ENCODE measurements at regions of chr1 and their contacts with region 1.

Region 1: GRCh38 chr1:169514566-169515270 is 29.0 kb upstream of the SLC19A2 start:
- DNase-seq: peak; percentile 32
- ATAC-seq: peak; percentile 44
- H3K4me3 ChIP-seq: no peak overlapping the region
- H3K27ac ChIP-seq: 0 out of 2 replicates have a peak overlapping the region, but pooled peaks have one; percentile 2
- H3K4me1 ChIP-seq: peaks cover 58% of the 10 kb centered on the region
- H3K27me3 ChIP-seq: no peaks in the 10 kb centered on the region
- CTCF ChIP-seq: no peak

Region 2: DNA sequence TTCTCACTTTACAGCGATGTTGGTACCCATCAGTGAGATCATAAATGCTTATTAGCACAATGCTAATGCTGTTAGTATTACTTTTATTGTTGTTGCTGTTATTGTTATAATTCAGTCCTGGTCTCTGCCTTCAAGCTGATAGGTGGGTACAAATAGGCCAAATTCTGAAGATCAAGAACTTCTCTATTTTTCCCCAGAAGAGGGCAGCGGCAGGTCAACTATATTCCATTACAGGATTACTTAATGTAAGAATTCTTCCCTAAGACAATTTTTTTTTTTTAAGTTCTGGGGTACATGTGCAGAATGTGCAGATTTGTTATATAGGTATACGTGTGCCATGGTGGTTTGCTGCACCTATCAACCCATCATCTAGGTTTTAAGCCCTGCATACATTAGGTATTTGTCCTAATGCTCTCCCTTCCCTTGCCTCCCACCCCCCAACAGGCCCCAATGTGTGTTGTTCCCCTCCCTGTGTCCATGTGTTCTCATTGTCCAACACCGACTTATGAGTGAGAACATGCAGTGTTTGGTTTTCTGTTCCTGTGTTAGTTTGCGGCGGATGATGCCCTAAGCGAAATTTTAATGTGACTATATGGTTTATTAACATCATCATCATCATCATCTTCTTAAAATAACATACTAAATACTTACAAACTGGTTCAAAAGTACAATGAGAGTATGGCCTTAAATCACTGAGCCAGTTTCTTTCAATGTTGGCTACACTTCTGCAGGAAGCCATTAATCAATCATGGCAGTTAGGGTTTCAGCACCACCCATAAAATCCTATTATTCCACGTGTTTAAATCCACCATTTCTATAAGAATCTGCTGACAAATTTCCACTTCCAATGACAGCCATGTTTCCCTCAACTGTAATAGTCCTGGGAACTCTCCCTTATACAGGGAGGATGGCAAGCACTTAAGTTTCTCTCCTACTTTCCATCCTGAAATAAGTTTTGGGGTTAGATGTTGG is 48.2 kb before region 1 on chr1:
- CTCF ChIA-PET with region 1: interaction called, 5 read pairs
- POLR2A ChIA-PET with region 1: interaction called, 5 read pairs
- intact Hi-C with region 1: loop called (anchors 2 kb)
- DNase-seq: peak; percentile 75
- ATAC-seq: peak; percentile 36; the same call in 1 of the 2 replicates
- H3K4me3 ChIP-seq: no peak overlapping the region
- H3K27ac ChIP-seq: no peak overlapping the region
- H3K4me1 ChIP-seq: peaks cover 16% of the 10 kb centered on the region
- H3K27me3 ChIP-seq: no peaks in the 10 kb centered on the region
- CTCF ChIP-seq: peak; percentile 70